T-cell (primary cell): ENCODE measurements at regions of chr13 and their contacts with region 1.

Region 1: GRCh38 chr13:106507560-106508274 is 27.7 kb downstream of the EFNB2 start:
- DNase-seq: no peak
- ATAC-seq: no peak
- H3K4me3 ChIP-seq: no peak overlapping the region
- H3K4me3 Mint-ChIP-seq: no peak overlapping the region
- H3K27ac ChIP-seq: no peak overlapping the region
- H3K27ac Mint-ChIP-seq: no peak overlapping the region
- H3K4me1 ChIP-seq: no peaks in the 10 kb centered on the region
- H3K4me1 Mint-ChIP-seq: no peaks in the 10 kb centered on the region
- H3K27me3 ChIP-seq: no peaks in the 10 kb centered on the region
- H3K27me3 Mint-ChIP-seq: peaks cover under 1 to 9% of the 10 kb centered on the region in 2 donors

Region 2: GRCh38 chr13:106407338-106407737 is 100.4 kb before region 1 on chr13:
- CTCF ChIA-PET with region 1: interaction called in 1 of 2 experiments, 4 read pairs
- POLR2A ChIA-PET with region 1: interaction called in 1 of 2 experiments, 11 read pairs
- DNase-seq: no peak
- ATAC-seq: no peak
- H3K4me3 ChIP-seq: no peak overlapping the region
- H3K4me3 Mint-ChIP-seq: no peak overlapping the region
- H3K27ac ChIP-seq: no peak overlapping the region
- H3K27ac Mint-ChIP-seq: no peak overlapping the region
- H3K4me1 ChIP-seq: no peaks in the 10 kb centered on the region
- H3K4me1 Mint-ChIP-seq: no peaks in the 10 kb centered on the region
- H3K27me3 ChIP-seq: no peaks in the 10 kb centered on the region
- H3K27me3 Mint-ChIP-seq: peaks cover 3 to 4% of the 10 kb centered on the region in 2 donors